ENCODE measurements at regions of chr6 and their contacts with region 1.

Region 1: GRCh38 chr6:41334482-41335040 is 847 bp upstream of the NCR2 start:
- DNase-seq: peak; percentile 49
- ATAC-seq: peak; percentile 4
- H3K4me3 Mint-ChIP-seq: peak overlapping the region; percentile 61
- H3K27ac Mint-ChIP-seq: peak overlapping the region; percentile 95
- H3K4me1 Mint-ChIP-seq: peaks cover 66% of the 10 kb centered on the region
- H3K27me3 Mint-ChIP-seq: no peaks in the 10 kb centered on the region

Region 2: DNA sequence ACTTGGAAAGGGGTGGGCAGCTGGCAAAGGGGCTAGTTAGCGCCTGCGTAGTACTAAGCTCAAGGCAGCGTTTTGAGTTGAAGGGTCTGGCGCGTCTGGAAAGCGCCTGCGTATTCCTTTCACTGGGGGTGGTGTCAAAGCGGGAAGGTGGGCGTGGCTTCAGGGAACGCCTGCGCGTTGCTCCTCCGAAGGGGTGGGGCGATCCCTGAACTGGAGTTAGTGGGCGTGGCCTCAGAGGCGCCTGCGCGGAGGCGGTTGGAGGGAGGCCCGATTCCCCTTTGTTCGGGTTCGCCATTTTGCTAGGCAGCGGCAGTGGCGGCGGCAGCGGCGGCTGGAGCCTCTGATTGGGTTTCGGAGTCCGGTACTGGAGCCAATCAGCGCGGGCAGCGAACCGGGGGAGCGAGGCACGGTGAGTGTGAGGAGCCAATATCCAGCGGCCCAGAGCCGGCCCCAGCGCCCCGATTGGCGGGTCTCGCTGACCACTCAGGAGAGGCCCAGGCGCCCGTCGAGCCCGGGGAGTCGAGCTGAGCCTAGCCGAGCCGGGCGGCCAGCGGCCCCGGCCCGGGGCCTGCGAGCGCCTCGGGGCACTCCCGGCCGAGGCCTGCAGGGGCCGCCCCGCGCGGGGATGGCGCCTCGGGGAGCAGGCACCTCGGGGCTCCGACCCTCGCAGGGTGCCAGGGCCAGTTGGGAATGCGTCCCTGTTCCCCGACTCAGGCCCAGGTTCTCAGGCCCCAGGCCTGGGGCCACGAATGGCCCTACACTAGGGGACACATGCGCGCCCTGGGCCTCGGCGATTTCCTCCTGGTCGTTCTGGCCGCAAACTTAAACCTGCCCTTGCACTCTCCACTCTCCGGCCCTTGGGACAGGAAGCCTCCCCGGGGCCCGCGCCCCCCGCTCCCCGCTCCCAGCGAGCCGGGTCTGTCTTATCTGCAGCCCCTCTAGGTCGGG is 261.6 kb before region 1 on chr6 and contains the start of gene NFYA:
- CTCF ChIA-PET with region 1: interaction called, 6 read pairs
- POLR2A ChIA-PET with region 1: interaction called, 11 read pairs
- DNase-seq: peak; percentile 100
- ATAC-seq: peak; percentile 80
- H3K4me3 Mint-ChIP-seq: peak within 1 kb of the TSS; percentile 91
- H3K27ac Mint-ChIP-seq: peak within 1 kb of the TSS; percentile 98
- H3K4me1 Mint-ChIP-seq: peaks cover 54% of the 10 kb centered on the region
- H3K27me3 Mint-ChIP-seq: no peaks in the 10 kb centered on the region
- total RNA-seq, gene NFYA: 32.3 to 32.5 TPM

Region 3: GRCh38 chr6:41306187-41306854 is 28.2 kb before region 1 on chr6:
- CTCF ChIA-PET with region 1: interaction called, 45 read pairs
- POLR2A ChIA-PET with region 1: interaction called, 5 read pairs
- DNase-seq: peak; percentile 71
- ATAC-seq: peak; percentile 60
- H3K4me3 Mint-ChIP-seq: no peak overlapping the region
- H3K27ac Mint-ChIP-seq: no peak overlapping the region
- H3K4me1 Mint-ChIP-seq: peaks cover 22% of the 10 kb centered on the region
- H3K27me3 Mint-ChIP-seq: peaks cover 40% of the 10 kb centered on the region

Region 4: DNA sequence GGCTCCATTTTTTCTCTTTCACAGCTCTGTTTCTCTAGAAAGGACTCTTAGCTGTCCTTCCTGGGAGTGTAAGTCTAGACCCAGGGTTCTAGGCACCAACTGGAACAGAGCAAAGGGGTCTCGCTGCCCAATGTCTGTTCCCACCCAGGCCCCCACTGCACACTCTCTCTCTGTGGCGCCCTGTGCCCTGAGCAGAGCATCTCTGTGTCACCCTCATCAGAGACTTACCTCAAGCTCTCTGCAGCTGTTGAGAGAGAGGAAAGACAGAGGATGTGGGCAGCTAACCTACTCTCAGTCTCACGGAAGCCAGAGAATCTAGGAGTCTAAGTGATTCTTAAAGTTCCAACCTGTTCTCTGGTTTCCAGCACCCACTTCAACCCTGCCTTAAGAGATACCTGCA is 10.3 kb after region 1 on chr6:
- CTCF ChIA-PET with region 1: interaction called, 114 read pairs
- POLR2A ChIA-PET with region 1: interaction called, 96 read pairs
- DNase-seq: peak; percentile 79
- ATAC-seq: peak; percentile 99
- H3K4me3 Mint-ChIP-seq: peak overlapping the region; percentile 55
- H3K27ac Mint-ChIP-seq: peak overlapping the region; percentile 91
- H3K4me1 Mint-ChIP-seq: peaks cover 87% of the 10 kb centered on the region
- H3K27me3 Mint-ChIP-seq: no peaks in the 10 kb centered on the region